Activated naive CD4-positive, alpha-beta T cell treated with anti-CD3 and anti-CD28 coated beads for 36 hours (primary cell): ENCODE measurements at regions of chr12 and their contacts with region 1.

Region 1: GRCh38 chr12:66235626-66236281 is 46.7 kb downstream of the IRAK3 start:
- DNase-seq: no peak
- H3K4me3 Mint-ChIP-seq: peak overlapping the region; percentile 55
- H3K27ac Mint-ChIP-seq: no peak overlapping the region
- H3K4me1 Mint-ChIP-seq: peaks cover 4% of the 10 kb centered on the region
- H3K27me3 Mint-ChIP-seq: peaks cover 35% of the 10 kb centered on the region

Region 2: GRCh38 chr12:64696080-64696741 is 1539.5 kb before region 1 on chr12:
- CTCF ChIA-PET with region 1: no interaction called
- intact Hi-C with region 1: no loop called
- DNase-seq: no peak
- H3K4me3 Mint-ChIP-seq: no peak overlapping the region
- H3K27ac Mint-ChIP-seq: peak overlapping the region; percentile 40
- H3K4me1 Mint-ChIP-seq: peaks cover 75% of the 10 kb centered on the region
- H3K27me3 Mint-ChIP-seq: no peaks in the 10 kb centered on the region

Region 3: GRCh38 chr12:66066137-66066928 is 169.4 kb before region 1 on chr12:
- CTCF ChIA-PET with region 1: no interaction called
- intact Hi-C with region 1: no loop called
- DNase-seq: peak; percentile 6
- H3K4me3 Mint-ChIP-seq: no peak overlapping the region
- H3K27ac Mint-ChIP-seq: no peak overlapping the region
- H3K4me1 Mint-ChIP-seq: peaks cover 18% of the 10 kb centered on the region
- H3K27me3 Mint-ChIP-seq: peaks cover 8% of the 10 kb centered on the region

Region 4: DNA sequence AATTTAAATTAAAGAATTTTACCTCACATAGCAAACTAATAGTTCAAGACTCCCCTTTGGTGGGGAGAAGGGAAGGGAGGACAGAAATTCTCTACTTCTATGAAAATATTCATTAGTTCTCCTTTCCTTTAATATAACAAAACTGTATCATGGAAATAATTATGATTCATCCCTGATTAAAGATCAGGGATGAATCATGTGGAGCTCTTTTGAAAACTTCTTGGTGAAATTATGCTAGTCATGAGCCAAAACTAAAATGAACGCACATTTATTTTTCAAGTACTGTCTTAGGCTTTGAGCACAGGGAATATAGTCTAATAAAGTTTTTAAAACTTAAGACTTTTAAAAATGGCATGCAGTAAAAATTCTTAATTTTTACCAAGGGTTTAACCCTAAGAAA is 83.0 kb before region 1 on chr12:
- CTCF ChIA-PET with region 1: no interaction called
- intact Hi-C with region 1: no loop called
- DNase-seq: no peak
- H3K4me3 Mint-ChIP-seq: no peak overlapping the region
- H3K27ac Mint-ChIP-seq: no peak overlapping the region
- H3K4me1 Mint-ChIP-seq: peaks cover 30% of the 10 kb centered on the region
- H3K27me3 Mint-ChIP-seq: no peaks in the 10 kb centered on the region

Region 5: DNA sequence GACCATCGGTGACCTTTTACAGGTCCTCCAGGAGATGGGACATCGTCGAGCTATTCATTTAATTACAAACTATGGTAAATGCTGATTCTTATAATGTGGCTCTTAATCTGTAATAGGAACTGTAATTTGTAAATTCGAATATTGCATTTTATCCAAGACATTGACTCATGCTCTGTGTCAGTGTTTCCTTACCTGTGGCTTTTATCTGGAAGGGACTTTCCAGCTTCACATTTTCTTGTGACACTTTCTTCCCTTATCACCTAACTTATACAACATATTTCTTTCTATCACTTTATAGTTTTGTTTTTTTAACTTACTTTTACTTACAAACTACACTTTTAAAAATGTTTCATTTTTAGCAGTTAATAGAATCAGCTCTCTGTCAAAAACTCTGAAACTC is 31.9 kb before region 1 on chr12:
- CTCF ChIA-PET with region 1: no interaction called
- intact Hi-C with region 1: loop called (anchors 2 kb)
- DNase-seq: peak; percentile 29
- H3K4me3 Mint-ChIP-seq: no peak overlapping the region
- H3K27ac Mint-ChIP-seq: peak overlapping the region; percentile 1
- H3K4me1 Mint-ChIP-seq: peaks cover 18% of the 10 kb centered on the region
- H3K27me3 Mint-ChIP-seq: peaks cover 3% of the 10 kb centered on the region